ENCODE measurements at regions of chr14 and their contacts with region 1.

Region 1: DNA sequence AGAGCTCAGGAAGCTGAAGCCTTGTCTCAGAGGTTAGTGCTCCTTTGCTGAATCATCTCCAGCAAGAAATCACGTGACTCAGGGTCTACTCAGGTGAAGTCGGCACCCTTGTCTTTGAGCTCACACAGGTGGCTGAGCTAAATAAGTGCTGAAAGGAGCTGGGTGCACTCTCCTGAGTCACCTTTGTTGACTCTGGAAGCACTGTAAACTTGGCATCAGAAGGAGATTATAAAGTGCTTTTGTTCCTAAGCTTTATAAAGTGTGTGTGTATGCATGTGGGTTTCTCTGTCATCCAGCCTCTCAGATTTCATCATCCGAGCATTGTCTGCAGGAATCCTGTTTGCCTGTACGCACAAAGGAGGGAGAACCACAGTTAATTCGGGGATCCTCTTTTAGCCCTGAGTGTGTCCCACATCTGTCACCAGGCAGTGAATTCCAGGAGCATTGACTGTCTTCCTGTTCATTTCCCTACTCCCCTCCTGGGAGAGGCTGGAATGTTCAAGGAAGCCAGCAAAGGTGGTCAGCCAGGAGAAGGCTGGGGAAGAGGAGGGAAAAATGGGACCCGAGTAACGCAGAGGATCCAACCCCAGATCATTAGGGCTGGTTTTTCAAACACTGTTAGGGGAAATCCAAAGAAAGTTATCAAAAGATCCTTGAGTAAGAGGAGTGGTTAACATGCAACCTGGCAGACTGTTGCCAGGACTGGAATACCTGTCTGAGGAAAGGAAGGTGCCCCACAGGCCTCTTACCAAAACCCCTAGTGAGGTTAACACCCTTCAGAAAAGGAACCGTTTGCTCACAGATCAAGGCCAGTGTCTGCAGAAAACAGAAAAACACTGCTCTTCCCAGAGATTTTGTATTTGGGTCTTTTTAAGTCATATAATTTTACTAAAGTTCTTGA is 157.5 kb upstream of the HIF1A start:
- DNase-seq: peak; percentile 100
- ATAC-seq: peak; percentile 94
- H3K4me3 ChIP-seq: peak overlapping the region; percentile 8; the same call in 1 of the 2 replicates
- H3K27ac ChIP-seq: peak overlapping the region; percentile 90
- H3K4me1 ChIP-seq: peaks cover 58% of the 10 kb centered on the region
- H3K27me3 ChIP-seq: no peaks in the 10 kb centered on the region
- CTCF ChIP-seq: no peak

Region 2: DNA sequence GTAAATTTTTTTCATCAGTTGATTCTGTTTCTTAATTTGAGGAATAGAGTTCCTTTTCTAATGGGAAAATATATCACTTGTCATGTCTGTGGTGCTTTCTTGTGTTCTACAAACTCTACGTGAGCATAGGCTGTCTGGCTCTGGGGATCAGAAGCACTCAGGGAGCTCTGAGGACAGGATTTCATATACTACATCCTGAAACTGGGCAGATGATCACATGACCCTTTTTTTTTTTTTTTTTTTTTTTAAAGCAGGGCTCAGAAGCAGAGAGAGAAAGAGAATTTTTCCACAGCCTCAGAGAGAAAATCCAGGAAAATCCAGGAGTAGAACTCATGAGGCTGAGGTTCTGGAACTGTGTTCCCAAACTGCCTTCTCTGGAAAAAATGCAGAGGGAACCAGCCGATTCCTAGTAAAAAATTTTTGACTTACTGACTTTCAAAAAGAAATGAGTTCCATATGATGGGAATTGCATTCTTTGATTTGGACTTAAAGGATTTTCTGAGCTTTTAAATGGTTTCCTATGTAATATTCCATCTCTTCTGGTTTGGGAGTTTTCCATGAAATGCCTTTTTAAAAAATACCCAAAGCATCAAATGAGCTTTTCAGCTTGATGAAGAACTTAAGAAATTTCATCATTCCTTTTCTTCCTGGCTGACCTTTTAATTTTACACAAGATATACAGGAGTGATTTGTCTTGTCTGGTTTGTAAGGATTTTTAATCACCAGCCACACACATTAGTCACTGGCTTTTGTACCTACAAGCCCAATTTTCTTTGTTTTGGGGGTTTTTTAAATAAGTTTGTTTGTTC is 25.6 kb before region 1 on chr14:
- CTCF ChIA-PET with region 1: no interaction called
- POLR2A ChIA-PET with region 1: interaction called, 4 read pairs
- intact Hi-C with region 1: loop called (anchors 1 kb)
- DNase-seq: peak; percentile 43
- ATAC-seq: 0 out of 2 replicates have a peak, but pooled peaks have one; percentile 1
- H3K4me3 ChIP-seq: no peak overlapping the region
- H3K27ac ChIP-seq: peak overlapping the region; percentile 39
- H3K4me1 ChIP-seq: peaks cover 62% of the 10 kb centered on the region
- H3K27me3 ChIP-seq: no peaks in the 10 kb centered on the region
- CTCF ChIP-seq: no peak

Region 3: DNA sequence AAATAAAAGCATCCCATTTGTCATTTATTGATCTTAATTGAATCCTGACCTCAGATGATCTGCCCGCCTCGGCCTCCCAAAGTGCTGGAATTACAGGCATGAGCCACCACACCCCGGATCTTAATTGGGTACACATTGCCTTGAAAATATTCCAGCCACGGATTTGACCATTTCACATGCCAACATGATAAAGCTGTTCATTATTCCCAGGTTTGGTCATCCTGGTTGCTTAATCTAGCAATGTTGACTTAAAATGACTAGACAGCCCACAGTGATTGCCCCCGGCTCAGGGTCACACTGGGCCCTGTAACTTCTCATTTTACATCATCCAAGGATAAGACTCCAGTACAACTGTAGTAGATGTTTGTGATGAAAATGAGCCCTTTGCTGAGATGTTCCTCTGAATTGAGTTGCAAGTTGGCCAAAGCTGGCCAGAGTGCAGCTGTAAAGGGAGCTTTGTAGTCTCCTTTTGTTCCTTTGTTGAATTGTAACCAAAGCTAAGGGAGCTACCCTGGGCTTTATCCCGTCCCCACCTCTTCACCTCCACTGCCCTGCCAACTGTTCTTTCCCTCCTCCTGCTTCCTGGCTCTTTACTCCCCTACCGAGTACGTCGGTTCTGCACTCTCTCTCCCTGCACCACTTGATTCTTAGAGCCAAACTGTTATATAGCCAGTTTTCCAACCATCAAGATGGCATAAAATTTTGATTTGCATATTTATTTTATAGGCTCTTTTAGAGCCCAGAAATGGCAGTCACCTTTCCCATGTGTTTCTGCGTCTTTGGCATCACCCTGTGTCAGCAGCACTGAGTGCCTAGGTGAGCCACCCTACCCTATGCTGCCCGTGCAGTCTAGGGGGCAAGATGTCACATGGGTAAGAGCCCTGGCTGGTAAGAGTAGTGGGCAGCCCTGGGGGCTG is 16.2 kb after region 1 on chr14:
- CTCF ChIA-PET with region 1: no interaction called
- POLR2A ChIA-PET with region 1: no interaction called
- intact Hi-C with region 1: loop called (anchors 1 kb)
- DNase-seq: peak; percentile 100
- ATAC-seq: peak; percentile 92
- H3K4me3 ChIP-seq: no peak overlapping the region; the same call in 1 of the 2 replicates
- H3K27ac ChIP-seq: peak overlapping the region; percentile 95
- H3K4me1 ChIP-seq: peaks cover 65% of the 10 kb centered on the region
- H3K27me3 ChIP-seq: no peaks in the 10 kb centered on the region
- CTCF ChIP-seq: no peak